Mammary epithelial cell (primary cell): ENCODE measurements at regions of chr15 and their contacts with region 1.

Region 1: DNA sequence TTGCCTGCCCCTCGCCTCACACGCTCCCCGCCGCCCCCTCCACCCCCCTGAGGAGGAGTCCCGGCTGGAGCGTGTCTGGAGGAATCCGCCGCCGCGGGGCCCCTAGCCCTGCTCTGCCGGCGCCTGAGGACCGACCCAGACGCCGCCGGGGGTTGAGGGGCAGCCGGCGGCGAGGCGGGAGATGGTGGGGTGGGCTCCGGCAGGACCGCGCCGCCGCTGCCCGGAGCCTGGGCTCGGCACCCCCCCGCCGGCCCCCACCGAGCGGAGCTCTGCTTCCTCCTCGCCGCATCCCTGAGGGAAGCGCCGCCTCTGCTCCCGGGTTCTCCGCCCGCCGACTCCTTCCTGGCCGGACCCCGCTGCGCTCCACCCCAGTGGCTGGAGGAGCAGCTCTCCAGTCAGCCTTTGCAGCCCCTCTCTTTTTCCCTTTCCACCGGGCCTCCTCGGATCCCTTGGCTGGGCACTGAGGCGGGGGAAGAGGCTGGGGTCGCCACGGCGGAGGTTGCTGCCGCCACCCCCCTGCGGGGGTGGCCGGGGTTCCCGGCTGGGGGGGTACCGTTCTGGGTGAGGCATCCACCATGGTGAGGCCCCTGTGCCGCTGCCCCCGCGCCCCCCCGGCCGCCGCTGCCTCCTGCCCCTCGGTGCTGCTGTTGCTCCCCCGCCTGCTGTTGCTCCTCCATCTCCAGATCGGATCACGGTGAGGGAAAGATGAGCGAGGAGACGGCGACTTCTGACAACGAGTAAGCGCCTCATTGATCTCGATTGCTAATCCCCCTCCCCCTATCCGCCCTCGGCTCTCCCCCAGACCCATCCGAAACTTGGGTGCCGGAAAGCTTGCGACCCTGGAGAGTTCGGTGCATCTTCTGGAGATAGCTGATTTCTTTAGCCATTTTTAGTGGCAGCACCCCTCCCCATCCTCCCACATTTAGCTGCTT is at the start of gene SPRED1:
- DNase-seq: peak; percentile 57
- H3K4me3 ChIP-seq: peak within 1 kb of the TSS; percentile 86 to 96 (median 91)
- H3K27ac ChIP-seq: peak within 1 kb of the TSS; percentile 72
- H3K4me1 ChIP-seq: peaks cover 16% of the 10 kb centered on the region
- H3K27me3 ChIP-seq: no peaks in the 10 kb centered on the region
- CTCF ChIP-seq: no peak
- total RNA-seq, gene SPRED1: 25.7 to 47.7 TPM

Region 2: GRCh38 chr15:38002883-38003477 is 249.8 kb before region 1 on chr15:
- CTCF ChIA-PET with region 1: no interaction called
- dilution Hi-C with region 1: no loop called
- in situ Hi-C with region 1: no loop called
- intact Hi-C with region 1: loop called (anchors 1 kb)
- DNase-seq: peak; percentile 62
- H3K4me3 ChIP-seq: no peak overlapping the region
- H3K27ac ChIP-seq: no peak overlapping the region
- H3K4me1 ChIP-seq: no peaks in the 10 kb centered on the region
- H3K27me3 ChIP-seq: no peaks in the 10 kb centered on the region
- CTCF ChIP-seq: peak; percentile 74 to 88

Region 3: DNA sequence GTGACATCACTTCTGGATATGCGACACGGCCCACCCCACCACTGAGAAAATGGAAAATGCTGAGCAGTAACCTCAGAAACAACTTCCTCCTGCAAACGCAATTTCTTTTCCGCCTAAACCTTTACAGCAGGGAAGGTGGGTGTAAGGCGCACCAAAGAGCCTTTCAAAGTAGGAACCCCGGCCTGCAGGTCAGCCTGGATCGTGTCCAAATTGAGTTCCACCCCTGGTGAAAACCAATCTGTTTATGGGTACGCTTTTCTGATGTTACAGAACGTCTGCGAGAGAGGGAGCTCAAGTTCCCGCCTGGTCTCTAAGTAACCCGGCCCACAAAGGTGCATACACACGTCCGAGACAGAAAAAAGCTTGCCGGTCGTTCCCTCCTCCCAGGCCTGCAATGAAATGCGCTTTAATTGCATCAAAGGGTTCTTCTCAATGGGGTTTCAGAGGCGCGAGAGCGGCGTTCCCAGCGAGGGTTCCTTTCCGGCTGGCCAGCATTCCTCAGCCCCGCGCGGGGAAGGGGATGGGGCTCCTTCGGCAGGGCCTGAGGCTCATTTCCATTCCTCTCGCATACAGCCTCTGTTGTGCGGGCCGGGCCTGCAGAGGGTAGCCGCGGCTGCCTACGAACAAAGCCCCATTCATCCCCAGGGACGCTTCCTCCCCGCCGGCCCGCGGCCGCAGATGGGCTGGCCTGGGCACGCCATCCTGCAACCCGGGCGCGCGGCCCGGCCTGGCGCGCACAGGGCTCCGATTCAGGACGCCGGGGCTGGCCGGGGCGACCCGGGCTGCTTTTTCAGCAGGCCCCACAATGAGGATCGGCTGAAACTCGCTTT is 180.2 kb before region 1 on chr15:
- CTCF ChIA-PET with region 1: interaction called, 3 read pairs
- dilution Hi-C with region 1: no loop called
- in situ Hi-C with region 1: no loop called
- intact Hi-C with region 1: loop called (anchors 1 kb)
- DNase-seq: peak; percentile 88
- H3K4me3 ChIP-seq: peak overlapping the region; percentile 25 to 50 (median 49)
- H3K27ac ChIP-seq: peak overlapping the region; percentile 92
- H3K4me1 ChIP-seq: peaks cover 72% of the 10 kb centered on the region
- H3K27me3 ChIP-seq: no peaks in the 10 kb centered on the region
- CTCF ChIP-seq: peak in 1 of 2 donors; percentile 46

Region 4: DNA sequence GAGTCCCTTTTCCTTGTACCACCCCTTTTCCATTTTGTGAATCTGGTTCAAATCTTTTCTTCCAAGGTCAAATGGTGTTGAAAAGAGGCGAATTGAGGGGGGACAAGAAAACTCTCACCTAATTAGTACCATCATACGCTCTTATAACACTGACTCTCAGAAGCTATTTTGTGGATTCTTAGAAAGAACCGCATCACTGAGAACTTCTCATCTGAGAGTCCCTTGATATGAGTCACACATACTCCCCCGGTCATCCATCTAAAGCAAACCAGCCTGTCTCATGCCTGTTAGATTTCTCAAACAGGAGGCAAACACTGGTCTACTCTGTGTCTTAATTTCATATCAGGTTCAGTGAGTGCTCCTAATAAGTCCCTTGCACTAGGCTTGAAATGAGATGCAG is 76.6 kb before region 1 on chr15:
- CTCF ChIA-PET with region 1: interaction called, 4 read pairs
- dilution Hi-C with region 1: no loop called
- in situ Hi-C with region 1: no loop called
- intact Hi-C with region 1: loop called (anchors 5 kb)
- DNase-seq: peak; percentile 35
- H3K4me3 ChIP-seq: no peak overlapping the region
- H3K27ac ChIP-seq: no peak overlapping the region
- H3K4me1 ChIP-seq: no peaks in the 10 kb centered on the region
- H3K27me3 ChIP-seq: no peaks in the 10 kb centered on the region
- CTCF ChIP-seq: no peak

Region 5: GRCh38 chr15:38217788-38218609 is 34.7 kb before region 1 on chr15:
- CTCF ChIA-PET with region 1: no interaction called
- dilution Hi-C with region 1: no loop called
- in situ Hi-C with region 1: no loop called
- intact Hi-C with region 1: loop called (anchors 2 kb)
- DNase-seq: peak; percentile 88
- H3K4me3 ChIP-seq: no peak overlapping the region
- H3K27ac ChIP-seq: peak overlapping the region; percentile 33
- H3K4me1 ChIP-seq: peaks cover 23% of the 10 kb centered on the region
- H3K27me3 ChIP-seq: no peaks in the 10 kb centered on the region
- CTCF ChIP-seq: no peak

Region 6: GRCh38 chr15:38354315-38354929 is 101.7 kb after region 1 on chr15:
- CTCF ChIA-PET with region 1: no interaction called
- dilution Hi-C with region 1: no loop called
- in situ Hi-C with region 1: no loop called
- intact Hi-C with region 1: loop called (anchors 1 kb)
- DNase-seq: peak; percentile 34
- H3K4me3 ChIP-seq: no peak overlapping the region
- H3K27ac ChIP-seq: no peak overlapping the region
- H3K4me1 ChIP-seq: no peaks in the 10 kb centered on the region
- H3K27me3 ChIP-seq: no peaks in the 10 kb centered on the region
- CTCF ChIP-seq: peak; percentile 76 to 83

Region 7: GRCh38 chr15:38398134-38398533 is 145.4 kb after region 1 on chr15:
- CTCF ChIA-PET with region 1: interaction called, 11 read pairs
- dilution Hi-C with region 1: no loop called
- in situ Hi-C with region 1: no loop called
- intact Hi-C with region 1: loop called (anchors 5 kb)
- DNase-seq: peak; percentile 95
- H3K4me3 ChIP-seq: no peak overlapping the region
- H3K27ac ChIP-seq: no peak overlapping the region
- H3K4me1 ChIP-seq: peaks cover 15% of the 10 kb centered on the region
- H3K27me3 ChIP-seq: no peaks in the 10 kb centered on the region
- CTCF ChIP-seq: no peak